Activated CD4-positive, alpha-beta memory T cell treated with anti-CD3 and anti-CD28 coated beads for 36 hours (primary cell): ENCODE measurements at regions of chr20 and their contacts with region 1.

Region 1: GRCh38 chr20:58407966-58408557 is 19.0 kb downstream of the VAPB start:
- DNase-seq: peak; percentile 37
- H3K4me3 Mint-ChIP-seq: peak overlapping the region; percentile 12
- H3K27ac Mint-ChIP-seq: peak overlapping the region; percentile 79
- H3K4me1 Mint-ChIP-seq: peaks cover 36% of the 10 kb centered on the region
- H3K27me3 Mint-ChIP-seq: no peaks in the 10 kb centered on the region

Region 2: DNA sequence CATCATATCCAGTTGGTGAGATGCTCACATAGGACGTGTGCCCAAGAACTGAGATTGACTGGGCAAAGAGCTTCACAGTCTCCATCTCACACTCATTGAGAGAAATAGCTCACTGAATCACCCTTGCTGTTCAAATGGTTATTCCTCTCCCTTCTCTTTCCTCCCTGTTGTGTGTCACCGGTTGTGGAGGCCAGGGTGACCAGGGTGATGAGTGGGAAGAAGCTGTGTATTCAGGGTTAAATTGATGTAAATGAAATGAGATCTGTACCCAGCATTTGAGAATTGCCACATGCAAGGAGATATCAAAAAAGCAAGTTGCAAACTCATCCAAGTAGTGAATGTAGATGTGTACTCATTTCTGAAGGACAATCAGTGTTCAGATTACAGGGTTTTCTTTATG is 55.6 kb before region 1 on chr20:
- CTCF ChIA-PET with region 1: no interaction called
- POLR2A ChIA-PET with region 1: no interaction called
- intact Hi-C with region 1: loop called (anchors 5 kb)
- DNase-seq: peak; percentile 76
- H3K4me3 Mint-ChIP-seq: no peak overlapping the region
- H3K27ac Mint-ChIP-seq: peak overlapping the region; percentile 52
- H3K4me1 Mint-ChIP-seq: peaks cover 13% of the 10 kb centered on the region
- H3K27me3 Mint-ChIP-seq: no peaks in the 10 kb centered on the region

Region 3: GRCh38 chr20:58388882-58389323 is 19.2 kb before region 1 on chr20 and contains the start of gene VAPB:
- CTCF ChIA-PET with region 1: interaction called, 4 read pairs
- POLR2A ChIA-PET with region 1: interaction called, 5 read pairs
- intact Hi-C with region 1: loop called (anchors 1 kb)
- DNase-seq: peak; percentile 98
- H3K4me3 Mint-ChIP-seq: peak within 1 kb of the TSS; percentile 95
- H3K27ac Mint-ChIP-seq: peak within 1 kb of the TSS; percentile 92
- H3K4me1 Mint-ChIP-seq: peaks cover 38% of the 10 kb centered on the region
- H3K27me3 Mint-ChIP-seq: peaks cover 2% of the 10 kb centered on the region
- total RNA-seq, gene VAPB: 34.6 to 37.0 TPM